A549 (cell line): ENCODE measurements at regions of chr20 and their contacts with region 1.

Region 1: DNA sequence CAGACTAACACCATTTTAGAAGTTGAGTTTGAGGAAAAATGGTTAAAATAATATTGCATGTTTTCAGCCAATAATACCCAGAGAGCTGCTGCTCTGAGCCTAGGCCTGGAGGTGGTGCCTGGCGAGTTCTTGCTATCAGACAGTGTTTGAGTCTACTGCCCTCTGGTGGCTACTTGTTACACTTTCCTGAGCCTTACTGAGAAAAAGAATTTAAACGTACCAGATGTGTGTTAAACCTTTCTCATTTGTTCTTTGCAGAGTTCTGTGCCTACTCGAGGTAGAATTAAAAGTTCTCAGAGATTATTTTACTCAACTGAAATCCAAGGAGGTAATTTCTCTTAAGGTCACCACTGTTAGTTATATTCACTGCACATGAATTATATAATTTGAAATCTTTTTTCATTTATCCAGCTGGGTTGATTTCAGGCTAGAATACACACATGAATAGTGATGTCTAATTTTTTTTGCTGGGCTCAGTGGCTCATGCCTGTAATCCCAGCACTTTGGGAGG is 38.2 kb downstream of the SHLD1 start:
- DNase-seq: peak; percentile 80 to 94
- ATAC-seq: peak; percentile 91 to 92
- H3K4me3 ChIP-seq: no peak overlapping the region
- H3K27ac ChIP-seq: peak overlapping the region; percentile 69 to 74
- H3K4me1 ChIP-seq: peaks cover 37% of the 10 kb centered on the region
- CTCF ChIP-seq: peak; percentile 99
- EP300 ChIP-seq: no peak
- POLR2A ChIP-seq: no peak
- RAD21 ChIP-seq: peak; percentile 100

Region 2: GRCh38 chr20:5529331-5530148 is 258.9 kb before region 1 on chr20:
- CTCF ChIA-PET with region 1: interaction called, 70 read pairs
- POLR2A ChIA-PET with region 1: no interaction called
- DNase-seq: peak; percentile 77 to 87
- ATAC-seq: peak; percentile 91 to 93
- H3K4me3 ChIP-seq: 0 out of 3 replicates have a peak overlapping the region, but pooled peaks have one; percentile 14
- H3K27ac ChIP-seq: peak overlapping the region; percentile 17 to 50; a peak in 4 of 6 replicates
- H3K4me1 ChIP-seq: peaks cover 16% of the 10 kb centered on the region
- CTCF ChIP-seq: peak; percentile 91
- EP300 ChIP-seq: no peak; a peak in 1 of 5 replicates
- POLR2A ChIP-seq: no peak
- RAD21 ChIP-seq: peak; percentile 93

Region 3: DNA sequence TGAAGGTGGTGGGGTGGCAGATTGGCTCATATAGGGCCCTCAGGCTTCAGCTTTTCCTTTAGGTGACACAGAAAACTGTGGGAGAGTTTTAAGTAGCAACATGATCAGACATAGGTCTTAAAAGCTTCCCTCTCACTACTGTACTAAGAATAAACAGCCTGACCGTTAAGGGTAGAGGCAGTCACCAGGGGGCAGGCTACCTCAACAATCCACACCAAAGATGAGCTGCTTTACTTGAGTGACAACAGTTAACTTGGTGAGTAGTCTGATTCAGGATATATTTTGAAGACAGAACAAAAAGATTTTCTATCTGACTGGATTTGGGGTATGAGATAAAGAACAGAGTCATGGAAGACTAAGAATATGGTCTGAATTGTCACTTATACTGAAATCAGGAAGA is 231.3 kb before region 1 on chr20:
- CTCF ChIA-PET with region 1: interaction called, 72 read pairs
- POLR2A ChIA-PET with region 1: interaction called, 3 read pairs
- DNase-seq: peak; percentile 67 to 78
- ATAC-seq: peak; percentile 91 to 97
- H3K4me3 ChIP-seq: no peak overlapping the region
- H3K27ac ChIP-seq: 0 out of 6 replicates have a peak overlapping the region, but pooled peaks of 1 of the 2 experiments have one; percentile 20
- H3K4me1 ChIP-seq: peaks cover 16% of the 10 kb centered on the region; the same call in 2 of the 3 replicates
- CTCF ChIP-seq: peak; percentile 91
- EP300 ChIP-seq: no peak
- POLR2A ChIP-seq: no peak
- RAD21 ChIP-seq: peak; percentile 86 to 94

Region 4: DNA sequence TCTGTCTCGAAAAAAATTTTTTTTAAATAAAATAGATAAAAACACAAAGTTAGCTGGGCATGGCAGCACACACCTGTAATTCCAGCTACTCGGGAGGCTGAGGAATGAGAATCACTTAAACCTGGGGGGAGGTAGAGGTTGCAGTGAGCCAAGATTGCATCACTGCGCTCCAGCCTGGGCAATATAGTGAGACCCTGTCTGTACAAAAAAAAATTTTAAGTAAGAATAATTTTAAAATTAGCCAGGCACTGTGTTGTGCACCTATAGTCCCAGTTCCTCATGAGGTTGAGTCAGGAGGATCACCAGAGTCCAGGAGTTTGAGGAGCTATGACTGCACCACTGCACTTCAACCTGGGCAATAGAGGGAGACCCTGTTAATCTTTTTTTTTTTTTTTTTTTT is 187.5 kb before region 1 on chr20:
- CTCF ChIA-PET with region 1: interaction called, 25 read pairs
- POLR2A ChIA-PET with region 1: no interaction called
- DNase-seq: no peak
- ATAC-seq: peak in 1 of 2 experiments; percentile 9; a peak in 1 of 6 replicates
- H3K4me3 ChIP-seq: no peak overlapping the region
- H3K27ac ChIP-seq: no peak overlapping the region
- H3K4me1 ChIP-seq: peaks cover 27% of the 10 kb centered on the region
- CTCF ChIP-seq: no peak
- EP300 ChIP-seq: no peak
- POLR2A ChIP-seq: no peak
- RAD21 ChIP-seq: no peak

Region 5: GRCh38 chr20:5719861-5720401 is 68.5 kb before region 1 on chr20:
- CTCF ChIA-PET with region 1: interaction called, 20 read pairs
- POLR2A ChIA-PET with region 1: no interaction called
- DNase-seq: peak in 1 of 2 experiments; percentile 65
- ATAC-seq: peak; percentile 55 to 56; a peak in 4 of 6 replicates
- H3K4me3 ChIP-seq: no peak overlapping the region
- H3K27ac ChIP-seq: peak overlapping the region; percentile 40 to 91; a peak in 5 of 6 replicates
- H3K4me1 ChIP-seq: peaks cover 43% of the 10 kb centered on the region
- CTCF ChIP-seq: no peak
- EP300 ChIP-seq: no peak
- POLR2A ChIP-seq: no peak
- RAD21 ChIP-seq: peak in 1 of 2 experiments; percentile 22; a peak in 1 of 5 replicates

Region 6: GRCh38 chr20:5757949-5758348 is 30.5 kb before region 1 on chr20:
- CTCF ChIA-PET with region 1: interaction called, 20 read pairs
- POLR2A ChIA-PET with region 1: no interaction called
- DNase-seq: no peak
- ATAC-seq: peak; percentile 59 to 62; a peak in 5 of 6 replicates
- H3K4me3 ChIP-seq: no peak overlapping the region
- H3K27ac ChIP-seq: no peak overlapping the region
- H3K4me1 ChIP-seq: peaks cover 4% of the 10 kb centered on the region; the same call in 2 of the 3 replicates
- CTCF ChIP-seq: no peak
- EP300 ChIP-seq: no peak
- POLR2A ChIP-seq: no peak
- RAD21 ChIP-seq: no peak

Region 7: GRCh38 chr20:5933802-5934436 is 145.5 kb after region 1 on chr20:
- CTCF ChIA-PET with region 1: interaction called, 16 read pairs
- POLR2A ChIA-PET with region 1: no interaction called
- DNase-seq: peak; percentile 41 to 48
- ATAC-seq: peak; percentile 81 to 83
- H3K4me3 ChIP-seq: no peak overlapping the region
- H3K27ac ChIP-seq: no peak overlapping the region
- H3K4me1 ChIP-seq: no peaks in the 10 kb centered on the region
- CTCF ChIP-seq: peak; percentile 72
- EP300 ChIP-seq: no peak
- POLR2A ChIP-seq: no peak
- RAD21 ChIP-seq: peak; percentile 73 to 84